Tibial artery (tissue), 4 donors: ENCODE measurements at regions of chr7 and their contacts with region 1.

Region 1: DNA sequence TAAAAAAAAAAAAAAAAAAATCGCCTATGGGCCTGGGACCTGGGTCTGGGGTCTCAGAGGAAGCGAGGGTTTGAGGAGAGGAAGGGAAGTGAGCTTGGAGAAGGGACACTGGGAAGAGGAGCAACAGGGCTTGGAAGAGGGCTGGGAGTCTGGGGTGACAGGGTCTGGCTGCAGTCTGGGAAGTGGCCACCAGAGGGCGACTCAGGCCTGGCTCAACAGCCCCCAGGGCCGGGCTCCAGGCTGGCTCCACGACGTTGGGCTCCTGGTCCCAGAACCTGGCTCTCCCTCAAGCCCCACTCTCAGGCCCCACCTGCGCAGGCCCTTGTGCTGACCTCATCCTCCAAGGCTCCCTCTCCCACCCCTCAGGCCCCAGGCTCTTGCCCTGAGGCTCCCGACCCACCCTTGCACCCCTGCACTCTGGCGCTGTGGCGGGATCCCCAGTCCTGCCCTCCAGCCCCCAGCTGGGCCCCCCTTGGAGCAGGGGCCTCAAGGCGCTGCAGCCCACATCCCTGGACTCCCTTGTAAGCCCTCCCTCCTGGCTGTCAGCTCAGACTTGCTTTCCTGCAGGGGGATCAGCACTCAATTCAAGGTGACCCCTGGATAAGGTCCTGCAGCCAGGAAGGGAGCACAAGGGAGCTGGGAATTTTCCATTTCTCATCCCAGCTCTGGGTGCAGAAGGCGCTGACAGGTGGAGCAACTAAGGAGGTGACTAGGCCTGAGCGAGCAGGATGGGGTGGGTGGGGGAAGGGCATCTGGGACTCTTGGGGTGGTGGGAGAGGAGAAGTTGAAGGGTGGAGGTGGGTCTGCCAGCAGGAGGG is 5.4 kb upstream of the SPACDR start:
- DNase-seq: peak; percentile 82 to 89
- H3K4me3 ChIP-seq: no peak overlapping the region
- H3K27ac ChIP-seq: peak overlapping the region in 1 of 2 donors; percentile 38
- H3K4me1 ChIP-seq: peaks cover 0 to 55% (median 36%) of the 10 kb centered on the region in 4 donors
- H3K27me3 ChIP-seq: no peaks in the 10 kb centered on the region
- CTCF ChIP-seq: peak; percentile 92 to 95

Region 2: GRCh38 chr7:99679032-99679399 is 790.4 kb before region 1 on chr7:
- intact Hi-C with region 1: no loop called
- DNase-seq: no peak
- H3K4me3 ChIP-seq: no peak overlapping the region
- H3K27ac ChIP-seq: no peak overlapping the region
- H3K4me1 ChIP-seq: no peaks in the 10 kb centered on the region
- H3K27me3 ChIP-seq: no peaks in the 10 kb centered on the region
- CTCF ChIP-seq: no peak

Region 3: DNA sequence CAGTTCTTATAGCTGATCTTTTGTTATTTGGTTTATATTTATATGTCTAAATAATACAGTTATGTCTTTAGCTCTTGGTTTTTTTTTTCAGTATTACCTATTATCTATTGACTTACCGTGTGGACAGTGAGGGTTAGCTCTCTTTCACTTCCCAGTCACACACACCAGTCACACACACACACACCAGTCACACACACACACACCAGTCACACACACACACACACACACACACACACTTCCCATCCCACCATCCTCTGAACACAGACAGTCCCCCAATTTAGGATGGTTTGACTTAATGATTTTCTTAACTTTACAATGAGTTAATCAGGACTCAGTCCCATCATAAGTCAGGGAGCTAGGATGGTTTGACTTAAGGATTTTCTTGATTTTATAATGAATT is 50.7 kb after region 1 on chr7:
- intact Hi-C with region 1: no loop called
- DNase-seq: no peak
- H3K4me3 ChIP-seq: no peak overlapping the region
- H3K27ac ChIP-seq: no peak overlapping the region
- H3K4me1 ChIP-seq: no peaks in the 10 kb centered on the region
- H3K27me3 ChIP-seq: peaks cover 0 to 4% of the 10 kb centered on the region in 2 donors
- CTCF ChIP-seq: no peak

Region 4: GRCh38 chr7:100546129-100546875 is 76.9 kb after region 1 on chr7:
- intact Hi-C with region 1: no loop called
- DNase-seq: no peak
- H3K4me3 ChIP-seq: no peak overlapping the region
- H3K27ac ChIP-seq: peak overlapping the region; percentile 85 to 92
- H3K4me1 ChIP-seq: peaks cover 0 to 59% (median 52%) of the 10 kb centered on the region in 4 donors
- H3K27me3 ChIP-seq: no peaks in the 10 kb centered on the region
- CTCF ChIP-seq: no peak

Region 5: GRCh38 chr7:100556541-100556940 is 87.1 kb after region 1 on chr7:
- intact Hi-C with region 1: loop called (anchors 5 kb)
- DNase-seq: no peak
- H3K4me3 ChIP-seq: no peak overlapping the region
- H3K27ac ChIP-seq: no peak overlapping the region
- H3K4me1 ChIP-seq: peaks cover 0 to 3% (median 0%) of the 10 kb centered on the region in 4 donors
- H3K27me3 ChIP-seq: no peaks in the 10 kb centered on the region
- CTCF ChIP-seq: no peak

Region 6: DNA sequence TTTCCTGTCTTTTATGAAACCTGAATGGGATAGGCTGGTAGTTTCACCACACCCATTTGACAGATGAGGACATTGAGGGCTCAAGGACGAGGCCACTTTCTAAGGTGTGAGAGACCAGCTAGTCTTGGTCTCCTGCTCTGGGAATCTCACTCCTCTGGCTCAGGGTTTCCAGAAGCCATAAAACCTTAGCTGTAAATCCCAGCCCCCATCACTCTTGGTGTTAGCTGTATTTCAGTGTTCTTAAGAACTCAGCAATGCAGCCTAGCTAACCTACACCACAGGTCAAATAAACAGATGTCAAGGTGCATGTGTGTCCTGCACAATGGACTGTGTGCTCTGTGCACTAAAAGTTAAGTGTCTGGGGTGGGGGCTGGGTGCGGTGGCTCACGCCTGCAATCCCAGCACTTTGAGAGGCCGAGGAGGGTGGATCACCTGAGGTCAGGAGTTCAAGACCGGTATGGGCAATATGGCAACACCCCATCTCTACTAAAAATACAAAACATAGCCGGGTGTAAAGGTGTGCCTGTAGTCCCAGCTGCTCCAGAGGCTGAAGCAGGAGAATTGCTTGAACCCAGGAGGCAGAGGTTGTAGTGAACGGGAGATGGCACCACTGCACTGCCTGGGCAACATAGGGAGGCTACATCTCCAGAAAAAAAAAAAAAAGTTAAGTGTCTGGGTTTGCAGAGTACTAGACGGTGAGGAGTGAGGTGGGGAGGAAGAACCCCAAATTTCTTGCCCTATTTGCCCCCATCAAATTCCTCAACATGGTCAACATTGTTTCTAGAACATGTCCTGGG is 250.3 kb after region 1 on chr7:
- intact Hi-C with region 1: loop called (anchors 10 kb)
- DNase-seq: no peak
- H3K4me3 ChIP-seq: no peak overlapping the region
- H3K27ac ChIP-seq: no peak overlapping the region
- H3K4me1 ChIP-seq: peaks cover 0 to 14% (median 8%) of the 10 kb centered on the region in 4 donors
- H3K27me3 ChIP-seq: peaks cover 0 to 62% of the 10 kb centered on the region in 2 donors
- CTCF ChIP-seq: no peak

Region 7: GRCh38 chr7:100867040-100867775 is 397.8 kb after region 1 on chr7 and contains the start of gene TRIP6:
- intact Hi-C with region 1: loop called (anchors 10 kb)
- DNase-seq: peak; percentile 94 to 97
- H3K4me3 ChIP-seq: peak within 1 kb of the TSS; percentile 69 to 93
- H3K27ac ChIP-seq: peak within 1 kb of the TSS; percentile 97 to 99
- H3K4me1 ChIP-seq: peaks cover 0 to 35% (median 26%) of the 10 kb centered on the region in 4 donors
- H3K27me3 ChIP-seq: no peaks in the 10 kb centered on the region
- CTCF ChIP-seq: no peak

Region 8: GRCh38 chr7:101964680-101965452 is 1495.4 kb after region 1 on chr7:
- intact Hi-C with region 1: no loop called
- DNase-seq: no peak
- H3K4me3 ChIP-seq: no peak overlapping the region
- H3K27ac ChIP-seq: no peak overlapping the region
- H3K4me1 ChIP-seq: no peaks in the 10 kb centered on the region
- H3K27me3 ChIP-seq: no peaks in the 10 kb centered on the region
- CTCF ChIP-seq: no peak